WTC11 (cell line): ENCODE measurements at regions of chr1 and their contacts with region 1.

Region 1: DNA sequence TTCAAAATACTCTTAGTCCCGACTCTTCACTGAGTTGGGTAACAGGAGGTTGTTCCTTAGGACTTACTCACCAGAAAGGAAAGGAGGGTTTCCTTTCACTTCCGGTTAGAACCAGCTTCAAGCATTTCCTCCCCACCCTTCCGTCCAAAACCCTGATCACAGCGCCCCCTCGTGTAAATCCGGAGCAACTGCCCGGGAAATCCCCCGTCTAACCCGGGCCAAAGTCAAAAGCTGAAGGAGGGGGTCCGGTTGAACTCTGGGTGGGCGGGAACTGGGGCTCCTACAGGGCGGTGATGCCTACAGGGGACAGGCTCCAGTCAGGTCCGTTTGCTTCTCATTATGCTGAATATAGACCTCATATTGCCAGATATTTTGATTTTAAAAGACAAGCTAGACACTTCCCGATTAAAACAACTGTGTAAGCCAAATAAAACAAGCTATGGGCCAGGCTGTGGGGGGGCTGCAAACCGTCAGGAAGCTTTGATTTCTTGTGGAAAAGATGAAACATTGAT is 15.0 kb upstream of the MTARC2 start:
- DNase-seq: peak; percentile 89
- ATAC-seq: peak; percentile 99
- H3K4me3 Mint-ChIP-seq: no peak overlapping the region
- H3K27ac Mint-ChIP-seq: no peak overlapping the region
- H3K4me1 Mint-ChIP-seq: no peaks in the 10 kb centered on the region
- H3K27me3 Mint-ChIP-seq: no peaks in the 10 kb centered on the region; the same call in 1 of the 2 replicates
- CTCF ChIP-seq: peak; percentile 96

Region 2: DNA sequence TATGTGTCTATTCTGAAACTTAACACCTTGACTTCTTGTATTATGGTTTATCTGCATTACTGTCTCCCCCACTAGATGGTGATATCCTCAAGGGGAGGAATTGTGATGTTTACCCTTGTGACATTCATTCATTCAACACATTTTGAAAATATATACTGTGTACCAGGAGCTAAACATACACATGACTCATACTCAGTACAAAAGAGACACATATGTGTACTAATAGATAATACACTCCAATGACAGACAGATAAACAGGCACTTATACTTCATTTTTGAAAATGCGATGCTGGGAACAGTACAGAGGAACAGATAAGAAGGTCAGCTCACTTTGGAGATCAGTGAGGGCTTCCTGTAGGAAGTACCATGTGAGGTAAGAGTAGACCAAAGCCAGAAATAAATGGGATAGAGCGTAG is 452.0 kb before region 1 on chr1:
- CTCF ChIA-PET with region 1: interaction called, 33 read pairs
- POLR2A ChIA-PET with region 1: no interaction called
- DNase-seq: no peak
- ATAC-seq: peak; percentile 86
- H3K4me3 Mint-ChIP-seq: no peak overlapping the region
- H3K27ac Mint-ChIP-seq: no peak overlapping the region
- H3K4me1 Mint-ChIP-seq: no peaks in the 10 kb centered on the region
- H3K27me3 Mint-ChIP-seq: no peaks in the 10 kb centered on the region
- CTCF ChIP-seq: no peak

Region 3: GRCh38 chr1:220680085-220680687 is 53.0 kb before region 1 on chr1:
- CTCF ChIA-PET with region 1: interaction called, 20 read pairs
- POLR2A ChIA-PET with region 1: no interaction called
- DNase-seq: no peak
- ATAC-seq: peak; percentile 97
- H3K4me3 Mint-ChIP-seq: no peak overlapping the region
- H3K27ac Mint-ChIP-seq: no peak overlapping the region
- H3K4me1 Mint-ChIP-seq: no peaks in the 10 kb centered on the region
- H3K27me3 Mint-ChIP-seq: no peaks in the 10 kb centered on the region
- CTCF ChIP-seq: peak; percentile 54

Region 4: DNA sequence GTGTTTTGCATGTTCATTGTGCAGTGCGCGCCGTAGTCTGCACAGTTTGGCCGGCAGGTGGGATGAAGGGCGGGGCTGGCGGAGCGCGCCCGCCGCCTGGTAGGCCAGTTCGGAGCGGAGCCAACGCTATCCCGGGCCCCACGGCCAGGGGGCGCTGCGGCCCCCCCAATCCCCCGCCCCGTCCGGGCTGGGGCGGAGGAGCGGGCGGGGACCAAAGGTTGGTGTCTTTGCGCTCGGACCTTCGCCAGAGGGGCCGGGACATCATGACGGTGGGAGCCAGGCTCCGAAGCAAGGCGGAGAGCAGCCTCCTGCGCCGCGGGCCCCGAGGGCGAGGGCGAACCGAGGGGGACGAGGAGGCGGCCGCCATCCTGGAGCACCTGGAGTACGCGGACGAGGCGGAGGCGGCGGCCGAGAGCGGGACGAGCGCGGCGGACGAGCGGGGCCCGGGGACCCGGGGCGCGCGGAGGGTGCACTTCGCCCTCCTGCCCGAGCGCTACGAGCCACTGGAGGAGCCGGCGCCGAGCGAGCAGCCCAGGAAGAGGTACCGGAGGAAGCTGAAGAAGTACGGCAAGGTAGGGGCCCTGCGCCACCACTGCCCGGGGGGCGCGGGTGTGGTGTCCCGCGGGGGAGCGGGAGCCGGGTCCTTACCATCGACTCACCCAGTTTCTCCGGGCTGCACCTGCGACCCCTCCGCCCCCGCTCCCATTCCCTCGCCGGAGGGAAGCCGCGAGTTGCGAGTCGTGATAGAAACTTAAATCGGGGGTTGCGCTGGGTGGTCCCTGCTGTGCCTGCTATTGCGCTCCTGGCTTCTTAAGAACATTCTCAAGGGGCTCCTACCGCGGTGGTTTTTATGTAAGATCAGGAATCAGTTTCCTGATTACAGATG is 42.8 kb before region 1 on chr1 and contains the start of gene C1orf115:
- CTCF ChIA-PET with region 1: interaction called, 23 read pairs
- POLR2A ChIA-PET with region 1: no interaction called
- DNase-seq: peak; percentile 89
- ATAC-seq: peak; percentile 90
- H3K4me3 Mint-ChIP-seq: peak within 1 kb of the TSS; percentile 93
- H3K27ac Mint-ChIP-seq: 0 out of 2 replicates have a peak within 1 kb of the TSS, but pooled peaks have one; percentile 60
- H3K4me1 Mint-ChIP-seq: peaks cover 15% of the 10 kb centered on the region
- H3K27me3 Mint-ChIP-seq: peaks cover 28% of the 10 kb centered on the region
- CTCF ChIP-seq: peak; percentile 99
- total RNA-seq, gene C1orf115: 10.0 to 11.5 TPM (median 11.1 TPM) in 3 replicates

Region 5: GRCh38 chr1:220700556-220701179 is 32.5 kb before region 1 on chr1:
- CTCF ChIA-PET with region 1: interaction called, 34 read pairs
- POLR2A ChIA-PET with region 1: interaction called, 3 read pairs
- DNase-seq: no peak
- ATAC-seq: peak; percentile 78
- H3K4me3 Mint-ChIP-seq: no peak overlapping the region
- H3K27ac Mint-ChIP-seq: no peak overlapping the region
- H3K4me1 Mint-ChIP-seq: peaks cover 41% of the 10 kb centered on the region
- H3K27me3 Mint-ChIP-seq: no peaks in the 10 kb centered on the region; the same call in 1 of the 2 replicates
- CTCF ChIP-seq: no peak

Region 6: GRCh38 chr1:220748089-220748934 is 15.2 kb after region 1 on chr1 and contains the start of gene MTARC2:
- CTCF ChIA-PET with region 1: interaction called, 64 read pairs
- POLR2A ChIA-PET with region 1: interaction called, 22 read pairs
- DNase-seq: peak; percentile 81
- ATAC-seq: peak; percentile 92
- H3K4me3 Mint-ChIP-seq: peak within 1 kb of the TSS; percentile 88
- H3K27ac Mint-ChIP-seq: peak within 1 kb of the TSS; percentile 91
- H3K4me1 Mint-ChIP-seq: peaks cover 49% of the 10 kb centered on the region
- H3K27me3 Mint-ChIP-seq: peaks cover 43% of the 10 kb centered on the region
- CTCF ChIP-seq: no peak
- total RNA-seq, gene MTARC2: 12.5 to 15.5 TPM (median 15.2 TPM) in 3 replicates

Region 7: DNA sequence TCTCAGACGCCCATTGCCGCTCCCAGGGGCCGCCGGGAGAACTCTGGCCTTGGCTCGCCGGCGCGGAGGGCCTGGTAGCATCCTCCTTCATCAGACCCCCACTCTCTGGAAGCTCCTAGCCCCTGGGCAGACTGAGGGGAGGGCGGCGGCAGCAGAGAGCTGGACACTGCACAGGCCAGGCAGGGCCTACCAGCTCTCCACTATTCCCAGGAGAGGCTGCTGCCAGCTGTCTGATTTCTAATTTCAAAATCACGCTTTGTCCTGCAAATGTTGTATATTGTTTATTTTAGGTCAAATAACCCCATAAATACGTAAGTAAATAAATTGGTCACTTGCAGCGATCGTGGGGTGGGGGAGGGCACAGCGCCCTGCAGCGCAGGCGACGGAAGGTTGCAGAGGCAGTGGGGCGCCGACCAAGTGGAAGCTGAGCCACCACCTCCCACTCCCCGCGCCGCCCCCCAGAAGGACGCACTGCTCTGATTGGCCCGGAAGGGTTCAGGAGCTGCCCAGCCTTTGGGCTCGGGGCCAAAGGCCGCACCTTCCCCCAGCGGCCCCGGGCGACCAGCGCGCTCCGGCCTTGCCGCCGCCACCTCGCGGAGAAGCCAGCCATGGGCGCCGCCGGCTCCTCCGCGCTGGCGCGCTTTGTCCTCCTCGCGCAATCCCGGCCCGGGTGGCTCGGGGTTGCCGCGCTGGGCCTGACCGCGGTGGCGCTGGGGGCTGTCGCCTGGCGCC is 53.4 kb after region 1 on chr1 and contains the start of gene MTARC1:
- CTCF ChIA-PET with region 1: interaction called, 26 read pairs
- POLR2A ChIA-PET with region 1: no interaction called
- DNase-seq: peak; percentile 80
- ATAC-seq: peak; percentile 92
- H3K4me3 Mint-ChIP-seq: peak within 1 kb of the TSS; percentile 80
- H3K27ac Mint-ChIP-seq: peak within 1 kb of the TSS; percentile 36
- H3K4me1 Mint-ChIP-seq: peaks cover 26% of the 10 kb centered on the region
- H3K27me3 Mint-ChIP-seq: peaks cover 3% of the 10 kb centered on the region; the same call in 1 of the 2 replicates
- CTCF ChIP-seq: no peak
- total RNA-seq, gene MTARC1: 25.8 to 33.6 TPM (median 29.5 TPM) in 3 replicates

Region 8: GRCh38 chr1:220818421-220819173 is 85.5 kb after region 1 on chr1:
- CTCF ChIA-PET with region 1: no interaction called
- POLR2A ChIA-PET with region 1: no interaction called
- DNase-seq: no peak
- ATAC-seq: peak; percentile 99
- H3K4me3 Mint-ChIP-seq: no peak overlapping the region; the same call in 1 of the 2 replicates
- H3K27ac Mint-ChIP-seq: peak overlapping the region; percentile 24; the same call in 1 of the 2 replicates
- H3K4me1 Mint-ChIP-seq: peaks cover 21% of the 10 kb centered on the region
- H3K27me3 Mint-ChIP-seq: no peaks in the 10 kb centered on the region; the same call in 1 of the 2 replicates
- CTCF ChIP-seq: no peak